CD4-positive, alpha-beta T cell (primary cell): ENCODE measurements at regions of chr4 and their contacts with region 1.

Region 1: DNA sequence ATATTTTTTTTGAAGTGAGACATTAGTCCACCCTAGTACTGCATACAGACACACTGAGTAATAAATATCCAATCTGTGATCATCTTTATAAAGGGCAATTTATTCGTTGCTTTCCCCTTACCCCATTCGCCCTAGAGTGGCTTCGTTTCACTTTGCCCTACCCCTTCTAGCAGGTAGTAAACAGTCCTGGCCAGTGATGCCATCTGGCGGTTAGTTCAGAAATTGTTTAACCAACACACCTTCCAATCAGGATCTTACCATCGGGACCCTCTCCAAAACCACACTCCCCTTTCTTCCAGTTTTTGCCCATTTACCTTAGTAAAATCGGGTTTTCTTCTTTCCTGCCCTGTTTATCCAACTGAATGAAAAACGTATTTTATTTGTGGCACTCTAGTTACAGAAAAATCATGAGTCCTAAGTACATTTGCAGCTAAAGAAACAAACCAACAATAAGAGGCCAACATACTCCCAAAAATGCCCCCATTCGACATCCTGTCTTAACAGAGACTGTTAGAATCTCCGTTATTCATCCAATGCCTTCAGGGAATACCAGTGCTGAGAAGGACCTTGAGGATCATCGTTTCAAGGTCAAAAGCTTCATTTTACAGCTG is 2.2 kb downstream of the PPA2 start:
- DNase-seq: peak; percentile 45 to 87 (median 54)
- ATAC-seq: peak; percentile 45
- H3K4me3 ChIP-seq: no peak overlapping the region
- H3K4me3 Mint-ChIP-seq: peak overlapping the region; percentile 99
- H3K27ac ChIP-seq: no peak overlapping the region
- H3K27ac Mint-ChIP-seq: peak overlapping the region; percentile 98
- H3K4me1 ChIP-seq: peaks cover 27% of the 10 kb centered on the region
- H3K4me1 Mint-ChIP-seq: peaks cover 67% of the 10 kb centered on the region
- H3K27me3 ChIP-seq: no peaks in the 10 kb centered on the region
- H3K27me3 Mint-ChIP-seq: no peaks in the 10 kb centered on the region
- CTCF ChIP-seq: peak; percentile 76

Region 2: DNA sequence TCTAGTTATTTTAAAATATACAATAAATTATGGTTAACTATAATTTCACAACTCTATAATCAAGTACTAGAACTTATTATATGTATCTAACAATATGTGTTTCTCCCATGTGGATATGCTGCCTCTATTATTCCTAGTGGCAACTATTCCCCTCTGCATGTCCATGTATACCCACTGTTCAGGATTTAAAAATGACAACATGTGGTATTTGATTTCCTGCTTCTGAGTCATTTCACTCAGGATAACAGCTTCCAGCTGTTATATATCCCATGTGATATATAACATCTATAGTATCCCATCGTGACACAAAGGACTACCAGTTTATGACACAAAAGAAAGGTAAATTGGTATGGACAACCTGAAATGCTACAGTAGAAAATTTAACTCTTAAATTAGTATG is 1584.5 kb before region 1 on chr4:
- CTCF ChIA-PET with region 1: no interaction called
- POLR2A ChIA-PET with region 1: no interaction called
- intact Hi-C with region 1: no loop called
- DNase-seq: no peak
- ATAC-seq: no peak
- H3K4me3 ChIP-seq: no peak overlapping the region
- H3K4me3 Mint-ChIP-seq: no peak overlapping the region
- H3K27ac ChIP-seq: no peak overlapping the region
- H3K27ac Mint-ChIP-seq: no peak overlapping the region
- H3K4me1 ChIP-seq: no peaks in the 10 kb centered on the region
- H3K4me1 Mint-ChIP-seq: no peaks in the 10 kb centered on the region
- H3K27me3 ChIP-seq: no peaks in the 10 kb centered on the region
- H3K27me3 Mint-ChIP-seq: no peaks in the 10 kb centered on the region
- CTCF ChIP-seq: no peak

Region 3: GRCh38 chr4:105140684-105141490 is 330.8 kb before region 1 on chr4:
- CTCF ChIA-PET with region 1: interaction called, 14 read pairs
- POLR2A ChIA-PET with region 1: interaction called, 45 read pairs
- intact Hi-C with region 1: loop called (anchors 1 kb)
- DNase-seq: peak in 9 of 14 experiments; percentile 17 to 79 (median 37)
- ATAC-seq: peak; percentile 52
- H3K4me3 ChIP-seq: no peak overlapping the region
- H3K4me3 Mint-ChIP-seq: no peak overlapping the region
- H3K27ac ChIP-seq: no peak overlapping the region
- H3K27ac Mint-ChIP-seq: no peak overlapping the region
- H3K4me1 ChIP-seq: peaks cover 5% of the 10 kb centered on the region
- H3K4me1 Mint-ChIP-seq: peaks cover 7% of the 10 kb centered on the region
- H3K27me3 ChIP-seq: peaks cover 0 to 3% of the 10 kb centered on the region in 2 experiments
- H3K27me3 Mint-ChIP-seq: no peaks in the 10 kb centered on the region
- CTCF ChIP-seq: peak; percentile 78

Region 4: GRCh38 chr4:105146276-105147015 is 325.2 kb before region 1 on chr4 and contains the start of gene TET2:
- CTCF ChIA-PET with region 1: interaction called, 14 read pairs
- POLR2A ChIA-PET with region 1: interaction called, 45 read pairs
- intact Hi-C with region 1: loop called (anchors 1 kb)
- DNase-seq: peak; percentile 56 to 92 (median 72)
- ATAC-seq: peak; percentile 85
- H3K4me3 ChIP-seq: peak within 1 kb of the TSS; percentile 72
- H3K4me3 Mint-ChIP-seq: peak within 1 kb of the TSS; percentile 99
- H3K27ac ChIP-seq: peak within 1 kb of the TSS; percentile 46 to 69
- H3K27ac Mint-ChIP-seq: peak within 1 kb of the TSS; percentile 98
- H3K4me1 ChIP-seq: peaks cover 8% of the 10 kb centered on the region
- H3K4me1 Mint-ChIP-seq: peaks cover 50% of the 10 kb centered on the region
- H3K27me3 ChIP-seq: no peaks in the 10 kb centered on the region
- H3K27me3 Mint-ChIP-seq: no peaks in the 10 kb centered on the region
- CTCF ChIP-seq: no peak
- total RNA-seq, gene TET2: 31.0 to 32.0 TPM

Region 5: DNA sequence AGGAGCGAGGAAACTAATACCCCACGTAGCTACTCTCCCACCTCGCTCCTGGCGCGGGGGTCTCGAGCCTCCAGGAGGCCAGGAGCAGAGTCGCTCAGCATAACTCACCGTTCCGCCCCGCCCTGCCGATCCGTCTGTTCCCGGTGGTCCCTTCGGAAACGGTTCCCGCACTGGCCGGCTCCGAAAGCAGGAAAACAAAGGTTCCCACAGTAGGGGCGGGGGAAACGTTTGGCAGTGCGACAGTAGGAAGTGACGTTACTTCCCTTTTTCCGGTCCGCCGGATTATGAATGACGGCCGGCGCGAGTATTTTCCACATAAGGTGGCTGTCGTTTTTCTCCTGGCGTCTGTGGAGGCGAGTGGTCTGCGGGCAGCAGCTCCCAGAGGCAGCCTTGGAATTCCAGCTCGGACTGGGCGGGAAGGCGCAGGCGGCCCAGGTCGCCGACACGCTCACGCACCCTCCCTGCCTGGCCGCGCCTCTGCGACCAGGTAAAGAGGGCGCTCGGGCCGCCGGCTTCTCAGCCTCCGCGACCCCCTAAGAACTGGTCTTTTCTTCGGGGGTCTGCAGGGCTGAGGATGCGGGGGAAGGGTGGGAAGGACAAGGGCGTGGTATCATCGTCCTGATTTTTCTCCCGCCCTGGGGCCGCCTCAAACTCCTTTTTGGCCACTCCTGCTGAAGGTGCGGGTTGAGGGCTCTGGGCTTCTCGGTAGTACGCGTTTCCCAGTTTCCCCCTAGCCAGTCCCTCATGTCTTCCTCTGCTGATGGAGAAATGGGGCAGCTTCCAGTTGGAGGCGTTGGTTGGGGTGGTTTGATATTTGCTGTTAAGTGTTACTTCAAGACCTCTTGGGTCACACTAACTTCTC is 237.1 kb after region 1 on chr4 and contains the starts of genes GSTCD and INTS12:
- CTCF ChIA-PET with region 1: interaction called, 4 read pairs
- POLR2A ChIA-PET with region 1: interaction called, 16 read pairs
- intact Hi-C with region 1: loop called (anchors 5 to 10 kb)
- DNase-seq: peak; percentile 77 to 93 (median 84)
- ATAC-seq: peak; percentile 90
- H3K4me3 ChIP-seq: peak within 1 kb of the TSS; percentile 68
- H3K4me3 Mint-ChIP-seq: peak within 1 kb of the TSS; percentile 100
- H3K27ac ChIP-seq: peak within 1 kb of the TSS; percentile 43 to 62
- H3K27ac Mint-ChIP-seq: peak within 1 kb of the TSS; percentile 94
- H3K4me1 ChIP-seq: peaks cover 9% of the 10 kb centered on the region
- H3K4me1 Mint-ChIP-seq: peaks cover 41% of the 10 kb centered on the region
- H3K27me3 ChIP-seq: no peaks in the 10 kb centered on the region
- H3K27me3 Mint-ChIP-seq: no peaks in the 10 kb centered on the region
- CTCF ChIP-seq: no peak
- total RNA-seq, gene GSTCD: 5.2 to 5.3 TPM
- total RNA-seq, gene INTS12: 17.8 to 19.9 TPM

Region 6: GRCh38 chr4:106114284-106114683 is 642.6 kb after region 1 on chr4:
- CTCF ChIA-PET with region 1: no interaction called
- POLR2A ChIA-PET with region 1: no interaction called
- intact Hi-C with region 1: no loop called
- DNase-seq: no peak
- ATAC-seq: no peak
- H3K4me3 ChIP-seq: no peak overlapping the region
- H3K4me3 Mint-ChIP-seq: no peak overlapping the region
- H3K27ac ChIP-seq: no peak overlapping the region
- H3K27ac Mint-ChIP-seq: no peak overlapping the region
- H3K4me1 ChIP-seq: no peaks in the 10 kb centered on the region
- H3K4me1 Mint-ChIP-seq: no peaks in the 10 kb centered on the region
- H3K27me3 ChIP-seq: no peaks in the 10 kb centered on the region
- H3K27me3 Mint-ChIP-seq: no peaks in the 10 kb centered on the region
- CTCF ChIP-seq: no peak

Region 7: DNA sequence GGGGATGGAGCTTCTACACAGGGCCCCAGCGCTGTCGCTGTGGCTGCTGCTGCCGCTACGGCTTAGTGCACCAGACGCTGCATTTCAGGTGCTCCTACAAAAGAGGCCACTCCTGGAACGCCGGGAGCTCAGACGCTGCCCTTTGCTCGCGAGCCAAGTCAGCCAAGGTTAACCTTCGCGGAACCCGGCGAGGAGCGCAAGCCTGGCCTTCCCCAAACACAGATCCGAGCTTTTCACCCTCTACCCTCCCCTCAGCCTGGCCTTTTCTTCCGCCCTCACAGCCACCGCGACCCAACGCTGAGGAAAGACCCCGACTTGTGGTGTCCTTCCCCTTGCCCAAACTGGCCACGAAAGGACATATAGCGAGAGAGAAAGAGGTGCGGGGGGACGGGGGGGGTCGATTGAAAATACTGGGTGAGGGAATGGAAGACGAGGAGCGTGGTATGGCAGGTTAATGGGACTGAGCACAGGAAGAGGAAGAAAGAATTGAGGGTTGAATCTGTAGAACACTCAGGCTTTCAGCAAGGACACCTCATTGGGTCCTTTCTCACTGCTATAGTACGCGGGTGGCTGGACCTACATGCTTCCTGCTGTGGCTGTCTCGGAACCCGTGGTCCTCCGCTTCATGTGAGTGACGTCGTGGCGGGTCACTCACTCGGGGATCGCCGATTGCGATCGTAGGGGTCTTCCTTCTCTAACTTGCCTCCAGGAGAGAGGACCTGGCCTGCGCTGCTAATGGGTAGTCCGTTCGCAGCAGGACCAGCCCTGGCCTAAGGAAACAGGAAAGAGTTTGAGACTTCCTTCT is 844.5 kb after region 1 on chr4 and contains the starts of genes AIMP1 and TBCK:
- CTCF ChIA-PET with region 1: no interaction called
- POLR2A ChIA-PET with region 1: interaction called, 5 read pairs
- intact Hi-C with region 1: loop called (anchors 5 kb)
- DNase-seq: peak; percentile 78 to 96 (median 84)
- ATAC-seq: peak; percentile 84
- H3K4me3 ChIP-seq: peak within 1 kb of the TSS; percentile 81
- H3K4me3 Mint-ChIP-seq: no peak within 1 kb of the TSS
- H3K27ac ChIP-seq: peak within 1 kb of the TSS; percentile 95 to 96
- H3K27ac Mint-ChIP-seq: no peak within 1 kb of the TSS
- H3K4me1 ChIP-seq: peaks cover 18% of the 10 kb centered on the region
- H3K4me1 Mint-ChIP-seq: peaks cover 26% of the 10 kb centered on the region
- H3K27me3 ChIP-seq: no peaks in the 10 kb centered on the region
- H3K27me3 Mint-ChIP-seq: no peaks in the 10 kb centered on the region
- CTCF ChIP-seq: no peak
- total RNA-seq, gene AIMP1: 75.4 to 77.8 TPM
- total RNA-seq, gene TBCK: 23.5 to 29.0 TPM